Activated naive CD4-positive, alpha-beta T cell treated with anti-CD3 and anti-CD28 coated beads for 36 hours (primary cell): ENCODE measurements at regions of chr5 and their contacts with region 1.

Region 1: GRCh38 chr5:134738133-134738962 is at the start of gene CAMLG:
- DNase-seq: peak; percentile 97
- H3K4me3 Mint-ChIP-seq: peak within 1 kb of the TSS; percentile 81
- H3K27ac Mint-ChIP-seq: peak within 1 kb of the TSS; percentile 88
- H3K4me1 Mint-ChIP-seq: peaks cover 26% of the 10 kb centered on the region
- H3K27me3 Mint-ChIP-seq: no peaks in the 10 kb centered on the region
- total RNA-seq, gene CAMLG: 34.6 to 36.9 TPM

Region 2: DNA sequence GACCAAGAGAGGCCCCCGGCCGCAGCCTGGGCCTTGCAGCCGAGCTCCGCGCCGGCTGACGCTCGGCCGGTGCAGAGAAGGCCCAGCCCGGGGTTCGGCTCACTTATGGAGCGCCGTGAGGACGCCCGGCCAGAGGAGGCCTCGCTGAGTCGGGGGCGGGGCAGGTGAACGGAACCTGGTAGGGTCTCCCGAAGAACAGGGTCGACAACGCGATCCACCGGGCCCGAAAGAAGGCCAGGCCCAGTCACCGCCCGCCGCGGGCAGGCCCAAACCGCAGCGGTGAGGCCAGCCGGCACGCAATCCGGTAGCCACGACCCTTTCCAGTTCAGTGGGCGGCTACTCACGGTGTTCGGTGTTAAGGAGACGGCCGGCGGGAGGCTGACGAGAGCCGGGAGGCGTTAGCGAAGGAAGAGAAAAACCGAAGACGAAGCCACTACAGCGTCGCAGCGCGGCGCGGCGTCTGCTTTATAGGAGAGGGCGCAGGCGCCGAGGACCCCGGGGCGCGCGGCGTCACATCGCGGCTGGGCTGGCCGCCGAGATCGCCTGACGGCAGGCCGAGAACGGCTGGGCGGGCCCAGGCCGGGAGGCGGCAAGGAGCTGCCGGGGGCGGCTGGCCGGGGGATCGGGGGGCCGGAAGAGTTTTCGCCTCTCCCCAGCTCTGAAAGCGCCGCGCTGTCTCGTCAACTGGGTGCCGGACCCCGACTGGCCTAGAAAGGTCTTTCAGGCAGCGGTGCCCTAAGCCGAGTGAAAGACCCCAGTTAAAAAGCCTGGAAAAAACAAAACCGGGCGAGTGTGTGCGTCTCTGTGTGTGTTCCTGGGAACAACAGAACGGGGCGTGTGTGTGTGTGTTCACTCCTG is 561.6 kb before region 1 on chr5 and contains the start of gene SKP1:
- CTCF ChIA-PET with region 1: interaction called, 8 read pairs
- intact Hi-C with region 1: loop called (anchors 1 kb)
- DNase-seq: peak; percentile 83
- H3K4me3 Mint-ChIP-seq: peak within 1 kb of the TSS; percentile 96
- H3K27ac Mint-ChIP-seq: peak within 1 kb of the TSS; percentile 94
- H3K4me1 Mint-ChIP-seq: peaks cover 31% of the 10 kb centered on the region
- H3K27me3 Mint-ChIP-seq: no peaks in the 10 kb centered on the region
- total RNA-seq, gene SKP1: 307 to 309 TPM

Region 3: GRCh38 chr5:134370871-134371833 is 367.2 kb before region 1 on chr5 and contains the start of gene UBE2B:
- CTCF ChIA-PET with region 1: interaction called, 5 read pairs
- intact Hi-C with region 1: loop called (anchors 1 kb)
- DNase-seq: peak; percentile 99
- H3K4me3 Mint-ChIP-seq: peak within 1 kb of the TSS; percentile 98
- H3K27ac Mint-ChIP-seq: peak within 1 kb of the TSS; percentile 99
- H3K4me1 Mint-ChIP-seq: peaks cover 58% of the 10 kb centered on the region
- H3K27me3 Mint-ChIP-seq: no peaks in the 10 kb centered on the region
- total RNA-seq, gene UBE2B: 116 to 129 TPM

Region 4: GRCh38 chr5:134555890-134556311 is 182.4 kb before region 1 on chr5:
- CTCF ChIA-PET with region 1: no interaction called
- intact Hi-C with region 1: loop called (anchors 1 kb)
- DNase-seq: peak; percentile 98
- H3K4me3 Mint-ChIP-seq: peak overlapping the region; percentile 80
- H3K27ac Mint-ChIP-seq: peak overlapping the region; percentile 100
- H3K4me1 Mint-ChIP-seq: peaks cover 38% of the 10 kb centered on the region
- H3K27me3 Mint-ChIP-seq: no peaks in the 10 kb centered on the region

Region 5: GRCh38 chr5:134609232-134609851 is 129.0 kb before region 1 on chr5:
- CTCF ChIA-PET with region 1: interaction called, 3 read pairs
- intact Hi-C with region 1: loop called (anchors 5 kb)
- DNase-seq: no peak
- H3K4me3 Mint-ChIP-seq: peak overlapping the region; percentile 17
- H3K27ac Mint-ChIP-seq: peak overlapping the region; percentile 87
- H3K4me1 Mint-ChIP-seq: peaks cover 37% of the 10 kb centered on the region
- H3K27me3 Mint-ChIP-seq: no peaks in the 10 kb centered on the region

Region 6: GRCh38 chr5:134758504-134759341 is 20.4 kb after region 1 on chr5 and contains the start of gene DDX46:
- CTCF ChIA-PET with region 1: interaction called, 47 read pairs
- intact Hi-C with region 1: loop called (anchors 1 kb)
- DNase-seq: peak; percentile 97
- H3K4me3 Mint-ChIP-seq: peak within 1 kb of the TSS; percentile 99
- H3K27ac Mint-ChIP-seq: peak within 1 kb of the TSS; percentile 80
- H3K4me1 Mint-ChIP-seq: peaks cover 34% of the 10 kb centered on the region
- H3K27me3 Mint-ChIP-seq: no peaks in the 10 kb centered on the region
- total RNA-seq, gene DDX46: 47.3 to 48.0 TPM

Region 7: DNA sequence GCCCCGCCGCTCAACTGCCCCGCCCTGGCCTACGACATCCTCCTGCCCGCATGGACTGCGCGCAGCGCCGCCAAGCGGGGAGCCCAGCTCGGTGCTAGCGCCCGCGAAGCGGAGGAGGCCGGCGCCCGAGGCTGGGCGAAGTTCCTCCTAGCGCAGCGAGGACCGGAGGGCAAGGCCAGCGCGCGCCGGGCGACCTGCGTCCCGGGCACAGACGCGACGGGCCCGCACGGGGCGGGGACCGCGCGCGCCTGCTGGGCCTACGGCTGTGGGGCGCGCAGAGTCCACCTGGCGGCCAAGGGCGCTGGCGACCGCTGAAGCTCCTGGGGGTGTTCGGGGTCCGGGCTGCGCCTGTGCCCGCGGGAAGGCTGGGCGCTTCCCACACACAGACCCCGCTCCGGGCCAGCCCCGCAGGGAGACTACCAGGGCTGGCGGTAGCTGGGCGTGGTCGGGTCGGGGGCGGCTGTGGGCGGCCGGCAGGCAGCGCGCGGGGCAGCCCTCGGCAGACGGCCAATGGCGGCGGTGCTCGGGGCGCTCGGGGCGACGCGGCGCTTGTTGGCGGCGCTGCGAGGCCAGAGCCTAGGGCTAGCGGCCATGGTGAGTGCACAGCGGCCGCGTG is 166.4 kb after region 1 on chr5 and contains the start of gene PCBD2:
- CTCF ChIA-PET with region 1: interaction called, 14 read pairs
- intact Hi-C with region 1: loop called (anchors 1 kb)
- DNase-seq: peak; percentile 95
- H3K4me3 Mint-ChIP-seq: peak within 1 kb of the TSS; percentile 98
- H3K27ac Mint-ChIP-seq: peak within 1 kb of the TSS; percentile 99
- H3K4me1 Mint-ChIP-seq: peaks cover 17% of the 10 kb centered on the region
- H3K27me3 Mint-ChIP-seq: no peaks in the 10 kb centered on the region
- total RNA-seq, gene PCBD2: 9.6 to 10.5 TPM

Region 8: DNA sequence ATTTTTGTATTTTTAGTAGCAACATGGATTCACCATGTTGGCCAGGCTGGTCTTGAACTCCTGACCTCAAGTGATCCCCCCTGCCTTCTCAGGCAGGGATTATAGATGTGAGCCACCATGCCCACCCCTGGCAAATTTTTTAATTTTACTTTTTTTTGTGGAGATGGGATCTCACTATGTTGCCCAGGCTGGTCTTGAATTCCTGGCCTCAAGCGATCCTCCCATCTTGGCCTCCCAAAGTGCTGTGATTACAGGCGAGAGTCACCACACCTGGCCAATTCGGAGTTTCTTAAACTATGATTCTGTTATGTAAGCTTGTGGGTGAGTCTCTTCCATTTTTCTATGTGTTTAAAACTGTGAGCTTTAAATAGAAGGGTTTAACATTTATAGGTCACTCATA is 194.2 kb after region 1 on chr5:
- CTCF ChIA-PET with region 1: no interaction called
- intact Hi-C with region 1: no loop called
- DNase-seq: no peak
- H3K4me3 Mint-ChIP-seq: no peak overlapping the region
- H3K27ac Mint-ChIP-seq: no peak overlapping the region
- H3K4me1 Mint-ChIP-seq: no peaks in the 10 kb centered on the region
- H3K27me3 Mint-ChIP-seq: no peaks in the 10 kb centered on the region